ENCODE measurements at regions of chrX and their contacts with region 1.

Region 1: DNA sequence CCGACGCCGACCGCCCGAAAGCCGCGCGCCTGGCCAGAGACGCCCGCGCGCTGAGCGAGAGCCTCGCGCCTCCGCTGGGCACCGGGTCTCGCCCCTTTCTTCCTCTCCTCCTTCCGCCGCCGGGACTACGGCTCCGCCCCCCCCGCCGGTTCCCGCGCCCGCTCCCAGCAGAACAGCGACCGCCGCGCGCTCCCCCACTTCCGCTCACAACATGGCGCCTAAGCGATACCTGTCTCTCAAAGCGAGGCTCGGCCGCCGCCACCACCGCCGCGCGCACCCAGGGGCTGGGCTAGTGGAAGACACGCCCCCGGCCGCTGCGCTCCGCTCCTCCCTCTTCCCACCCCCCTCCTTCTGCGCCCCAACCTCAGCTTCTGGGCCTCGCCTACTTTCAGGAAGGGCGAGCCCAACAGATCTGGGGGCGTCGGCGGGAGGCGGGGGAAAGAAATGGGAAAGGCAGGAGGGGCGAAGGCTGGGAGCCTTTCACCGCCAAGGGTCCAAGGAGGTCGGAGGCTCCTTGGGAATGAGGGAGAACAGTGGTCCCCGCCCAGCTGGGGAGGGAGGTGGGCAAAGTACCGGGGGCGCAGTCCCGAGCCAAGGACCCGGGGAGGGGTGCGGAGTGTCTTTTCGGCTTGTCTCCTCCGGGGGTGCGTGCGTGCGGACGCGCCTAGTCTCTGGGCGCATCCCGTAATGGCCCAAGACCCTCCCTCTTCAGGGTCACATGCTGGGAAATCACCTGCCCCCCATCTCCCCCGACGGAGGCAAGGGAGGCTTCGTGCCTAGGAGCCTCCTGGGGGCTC is at the start of gene RPS6KA3:
- DNase-seq: peak; percentile 82
- ATAC-seq: peak; percentile 72
- H3K4me3 ChIP-seq: peak within 1 kb of the TSS; percentile 84
- H3K27ac ChIP-seq: peak within 1 kb of the TSS; percentile 67
- H3K4me1 ChIP-seq: peaks cover 49% of the 10 kb centered on the region
- H3K27me3 ChIP-seq: no peaks in the 10 kb centered on the region
- CTCF ChIP-seq: no peak
- total RNA-seq, gene RPS6KA3: 22.8 and 24.6 TPM in 2 replicates

Region 2: GRCh38 chrX:20224814-20225487 is 42.1 kb before region 1 on chrX:
- CTCF ChIA-PET with region 1: no interaction called
- POLR2A ChIA-PET with region 1: no interaction called
- intact Hi-C with region 1: no loop called
- DNase-seq: peak; percentile 38
- ATAC-seq: no peak; the same call in 1 of the 2 replicates
- H3K4me3 ChIP-seq: no peak overlapping the region
- H3K27ac ChIP-seq: no peak overlapping the region
- H3K4me1 ChIP-seq: peaks cover 40% of the 10 kb centered on the region
- H3K27me3 ChIP-seq: no peaks in the 10 kb centered on the region
- CTCF ChIP-seq: no peak

Region 3: GRCh38 chrX:20285513-20285912 is 18.5 kb after region 1 on chrX:
- CTCF ChIA-PET with region 1: no interaction called
- POLR2A ChIA-PET with region 1: interaction called, 12 read pairs
- intact Hi-C with region 1: no loop called
- DNase-seq: peak; percentile 79
- ATAC-seq: peak; percentile 97
- H3K4me3 ChIP-seq: no peak overlapping the region
- H3K27ac ChIP-seq: peak overlapping the region; percentile 79
- H3K4me1 ChIP-seq: peaks cover 16% of the 10 kb centered on the region
- H3K27me3 ChIP-seq: no peaks in the 10 kb centered on the region
- CTCF ChIP-seq: no peak

Region 4: GRCh38 chrX:20320461-20321159 is 53.6 kb after region 1 on chrX:
- CTCF ChIA-PET with region 1: no interaction called
- POLR2A ChIA-PET with region 1: no interaction called
- intact Hi-C with region 1: loop called (anchors 2 kb)
- DNase-seq: peak; percentile 52
- ATAC-seq: peak; percentile 83
- H3K4me3 ChIP-seq: peak overlapping the region; percentile 61
- H3K27ac ChIP-seq: peak overlapping the region; percentile 62
- H3K4me1 ChIP-seq: peaks cover 18% of the 10 kb centered on the region; the same call in 1 of the 2 replicates
- H3K27me3 ChIP-seq: no peaks in the 10 kb centered on the region
- CTCF ChIP-seq: no peak

Region 5: GRCh38 chrX:20471483-20471882 is 204.5 kb after region 1 on chrX:
- CTCF ChIA-PET with region 1: no interaction called
- POLR2A ChIA-PET with region 1: no interaction called
- intact Hi-C with region 1: no loop called
- DNase-seq: no peak
- ATAC-seq: no peak
- H3K4me3 ChIP-seq: no peak overlapping the region
- H3K27ac ChIP-seq: no peak overlapping the region
- H3K4me1 ChIP-seq: no peaks in the 10 kb centered on the region
- H3K27me3 ChIP-seq: no peaks in the 10 kb centered on the region
- CTCF ChIP-seq: no peak